Activated naive CD4-positive, alpha-beta T cell treated with anti-CD3 and anti-CD28 coated beads for 36 hours (primary cell): ENCODE measurements at regions of chr1 and their contacts with region 1.

Region 1: DNA sequence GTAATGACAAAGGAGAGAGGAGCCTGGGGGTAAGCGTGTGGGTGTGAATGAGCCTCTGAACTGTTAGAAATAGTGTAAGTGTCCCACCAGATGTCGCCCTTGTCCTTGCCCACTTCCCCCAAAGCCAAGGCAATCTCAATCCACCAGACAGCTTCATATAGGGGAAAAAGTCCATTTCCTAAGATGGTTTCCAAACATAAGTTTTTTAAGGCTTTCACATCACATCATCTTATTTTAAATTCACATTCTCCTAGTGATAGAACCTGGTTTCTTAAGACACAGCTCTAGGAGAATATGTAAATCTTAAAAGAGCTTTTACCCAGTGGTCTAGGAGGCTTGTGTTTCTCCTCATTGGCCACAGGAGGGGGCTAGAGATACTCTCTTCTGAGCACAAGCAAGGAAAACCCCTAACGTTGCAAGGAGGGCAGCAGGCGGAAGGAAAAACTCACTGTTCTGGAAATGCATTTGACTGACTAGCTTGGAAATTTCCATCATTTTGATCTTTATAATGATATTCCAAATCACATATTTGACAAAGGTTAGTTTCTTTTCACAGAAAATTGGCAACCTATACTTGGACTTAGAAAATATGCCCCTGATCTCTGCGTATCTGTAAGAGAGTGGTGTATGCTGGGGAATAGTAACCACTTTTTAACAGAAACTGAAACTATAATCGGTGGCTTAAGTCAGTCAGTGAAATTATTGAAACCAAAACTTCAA is 51.9 kb upstream of the LPAR3 start:
- DNase-seq: peak; percentile 81
- H3K4me3 Mint-ChIP-seq: peak overlapping the region; percentile 74
- H3K27ac Mint-ChIP-seq: peak overlapping the region; percentile 92
- H3K4me1 Mint-ChIP-seq: peaks cover 14% of the 10 kb centered on the region
- H3K27me3 Mint-ChIP-seq: no peaks in the 10 kb centered on the region

Region 2: GRCh38 chr1:84433258-84434080 is 511.5 kb before region 1 on chr1:
- CTCF ChIA-PET with region 1: no interaction called
- intact Hi-C with region 1: no loop called
- DNase-seq: peak; percentile 76
- H3K4me3 Mint-ChIP-seq: peak overlapping the region; percentile 63
- H3K27ac Mint-ChIP-seq: peak overlapping the region; percentile 25
- H3K4me1 Mint-ChIP-seq: peaks cover 15% of the 10 kb centered on the region
- H3K27me3 Mint-ChIP-seq: no peaks in the 10 kb centered on the region

Region 3: GRCh38 chr1:84996846-84997666 is 52.1 kb after region 1 on chr1 and contains the start of gene MCOLN2:
- CTCF ChIA-PET with region 1: interaction called, 24 read pairs
- intact Hi-C with region 1: loop called (anchors 1 kb)
- DNase-seq: peak; percentile 43
- H3K4me3 Mint-ChIP-seq: peak within 1 kb of the TSS; percentile 79
- H3K27ac Mint-ChIP-seq: peak within 1 kb of the TSS; percentile 80
- H3K4me1 Mint-ChIP-seq: peaks cover 40% of the 10 kb centered on the region
- H3K27me3 Mint-ChIP-seq: peaks cover 17% of the 10 kb centered on the region
- total RNA-seq, gene MCOLN2: 7.4 to 8.4 TPM

Region 4: DNA sequence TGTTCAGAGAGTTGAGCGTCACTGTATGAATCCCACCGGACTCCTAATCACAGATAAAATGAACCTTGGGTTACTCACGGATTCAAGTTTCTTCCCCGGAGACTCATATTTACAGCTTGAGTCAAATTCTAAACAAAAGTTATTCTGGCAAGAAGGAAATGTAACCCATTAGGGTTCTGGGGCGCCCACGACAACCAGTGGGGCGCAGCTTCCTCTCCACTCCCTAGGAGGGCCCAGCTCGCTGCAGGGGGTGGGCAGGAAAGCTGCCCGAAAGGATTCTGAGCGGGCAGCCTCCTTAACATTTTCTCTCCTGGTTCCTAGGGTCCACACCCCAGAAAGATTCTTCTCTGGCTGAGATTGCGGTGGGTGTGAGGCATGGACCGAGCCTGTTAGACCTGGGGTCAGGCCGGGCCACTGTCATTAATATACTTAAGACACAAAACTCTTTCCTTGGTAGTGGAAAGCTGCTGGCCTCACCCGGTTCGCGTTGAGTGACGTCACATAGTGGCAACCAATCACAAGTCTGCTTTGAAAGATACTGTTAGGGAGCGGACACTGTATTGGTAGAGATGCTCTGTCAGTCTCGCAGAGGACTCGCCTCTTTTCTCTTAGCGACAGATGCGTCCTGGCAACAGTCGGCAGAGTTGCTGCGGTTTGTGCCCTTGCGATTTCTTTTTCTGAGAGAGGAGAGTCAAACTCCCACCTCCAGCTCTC is 116.9 kb after region 1 on chr1:
- CTCF ChIA-PET with region 1: interaction called, 12 read pairs
- intact Hi-C with region 1: loop called (anchors 1 kb)
- DNase-seq: peak; percentile 93
- H3K4me3 Mint-ChIP-seq: peak overlapping the region; percentile 82
- H3K27ac Mint-ChIP-seq: peak overlapping the region; percentile 60
- H3K4me1 Mint-ChIP-seq: peaks cover 10% of the 10 kb centered on the region
- H3K27me3 Mint-ChIP-seq: no peaks in the 10 kb centered on the region

Region 5: DNA sequence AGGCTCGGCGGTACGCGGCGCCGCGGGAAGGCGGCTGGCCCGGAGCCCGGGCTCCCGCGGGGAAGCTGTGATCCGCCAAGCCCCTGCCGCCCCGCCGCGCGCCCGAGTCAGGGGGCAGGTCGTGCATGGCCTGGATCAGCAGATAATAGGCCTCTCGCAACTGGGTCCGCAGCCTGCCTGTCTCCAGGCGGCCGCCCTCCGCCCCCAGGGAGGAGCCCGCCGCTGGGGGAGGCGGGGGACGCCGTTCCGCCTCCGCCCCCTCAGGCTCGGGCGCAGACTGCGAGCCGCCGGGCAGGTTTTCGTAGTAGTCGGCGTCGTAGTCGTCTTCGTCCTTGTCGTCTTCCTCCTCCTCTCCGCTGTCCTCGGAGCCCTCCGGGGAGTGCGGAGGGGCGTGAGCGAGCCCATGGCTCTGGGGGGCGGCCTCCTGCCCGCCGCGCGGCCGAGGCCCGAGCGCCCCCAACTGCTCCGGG is 256.0 kb after region 1 on chr1 and contains the start of gene SYDE2:
- CTCF ChIA-PET with region 1: interaction called, 4 read pairs
- intact Hi-C with region 1: loop called (anchors 1 kb)
- DNase-seq: peak; percentile 76
- H3K4me3 Mint-ChIP-seq: peak within 1 kb of the TSS; percentile 98
- H3K27ac Mint-ChIP-seq: peak within 1 kb of the TSS; percentile 89
- H3K4me1 Mint-ChIP-seq: peaks cover 33% of the 10 kb centered on the region
- H3K27me3 Mint-ChIP-seq: no peaks in the 10 kb centered on the region
- total RNA-seq, gene SYDE2: 4.4 to 5.1 TPM

Region 6: DNA sequence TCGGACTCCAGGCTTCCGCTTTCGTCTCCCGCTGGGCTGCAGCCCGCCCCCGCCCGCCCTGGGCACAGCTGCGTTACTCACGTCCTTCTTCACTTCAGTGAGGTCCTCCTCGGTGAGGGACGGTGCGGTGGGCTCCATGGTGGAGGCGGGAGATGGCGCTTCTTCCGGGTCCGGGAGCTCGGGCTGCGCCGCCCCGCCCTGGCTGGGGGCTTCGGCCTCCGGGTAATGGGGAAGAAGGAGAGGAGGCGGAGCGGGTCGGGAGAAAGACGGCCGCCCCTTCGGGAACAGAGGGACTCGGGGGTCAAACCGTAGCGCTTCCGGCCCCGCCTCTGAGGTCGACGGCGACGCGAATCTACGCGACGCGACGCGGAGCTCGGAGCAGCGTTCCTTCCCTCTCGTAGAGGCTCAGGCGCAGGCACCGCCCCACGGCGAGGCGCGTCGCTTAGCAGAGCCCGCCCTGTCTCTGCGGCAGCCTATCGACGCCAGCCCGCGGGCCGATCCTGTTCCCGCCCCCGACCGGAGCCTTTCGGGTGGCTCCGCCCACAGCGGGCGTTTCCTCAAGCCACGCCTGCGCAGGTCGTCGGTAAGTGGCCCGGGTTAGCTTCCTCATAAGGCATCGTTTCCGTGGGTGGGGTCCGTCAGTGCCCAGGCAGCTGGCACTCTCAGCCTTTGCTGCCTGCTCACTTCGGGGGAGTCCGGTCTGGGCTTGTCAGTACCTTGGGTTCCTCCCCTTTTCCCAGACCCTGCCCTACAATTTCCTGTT is 331.5 kb after region 1 on chr1 and contains the start of gene BCL10:
- CTCF ChIA-PET with region 1: interaction called, 5 read pairs
- intact Hi-C with region 1: loop called (anchors 1 kb)
- DNase-seq: peak; percentile 97
- H3K4me3 Mint-ChIP-seq: peak within 1 kb of the TSS; percentile 80
- H3K27ac Mint-ChIP-seq: peak within 1 kb of the TSS; percentile 87
- H3K4me1 Mint-ChIP-seq: peaks cover 46% of the 10 kb centered on the region
- H3K27me3 Mint-ChIP-seq: no peaks in the 10 kb centered on the region
- total RNA-seq, gene BCL10: 13.8 to 17.7 TPM

Region 7: DNA sequence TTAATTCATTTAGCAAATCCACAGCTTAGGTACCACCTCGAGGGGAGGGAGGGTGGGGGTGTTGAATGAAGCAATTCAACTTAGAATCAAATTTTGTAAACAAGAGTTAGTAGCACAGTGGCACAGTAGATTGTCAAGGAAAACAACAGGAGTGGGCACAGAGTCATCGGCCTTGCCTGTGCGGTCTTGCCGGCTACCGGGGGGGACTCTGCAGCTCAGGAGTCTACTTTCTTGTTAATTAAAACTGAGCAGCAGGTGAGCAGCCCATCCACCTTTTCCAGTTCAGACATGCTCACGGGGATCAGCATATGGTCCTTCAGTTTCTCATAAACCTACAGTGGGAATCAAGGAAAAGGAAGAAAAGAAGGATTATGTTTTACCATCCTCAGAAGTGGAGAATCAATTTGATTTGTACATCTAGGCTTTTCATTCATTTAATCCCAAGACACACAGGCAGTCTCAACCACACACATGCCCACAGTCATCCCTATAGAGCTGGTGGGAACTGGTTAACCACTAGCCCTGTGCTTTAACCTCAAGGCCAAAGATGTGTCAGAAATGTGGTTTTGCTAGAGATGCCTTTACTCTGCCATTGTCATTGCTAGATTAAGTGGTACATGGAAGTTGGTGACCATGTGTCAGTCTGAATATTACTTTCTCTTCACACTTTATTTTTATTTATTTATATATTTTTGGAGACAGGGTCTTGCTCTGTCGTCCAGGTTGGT is 376.5 kb after region 1 on chr1:
- CTCF ChIA-PET with region 1: no interaction called
- intact Hi-C with region 1: no loop called
- DNase-seq: peak; percentile 39
- H3K4me3 Mint-ChIP-seq: no peak overlapping the region
- H3K27ac Mint-ChIP-seq: no peak overlapping the region
- H3K4me1 Mint-ChIP-seq: peaks cover 5% of the 10 kb centered on the region
- H3K27me3 Mint-ChIP-seq: peaks cover 11% of the 10 kb centered on the region

Region 8: DNA sequence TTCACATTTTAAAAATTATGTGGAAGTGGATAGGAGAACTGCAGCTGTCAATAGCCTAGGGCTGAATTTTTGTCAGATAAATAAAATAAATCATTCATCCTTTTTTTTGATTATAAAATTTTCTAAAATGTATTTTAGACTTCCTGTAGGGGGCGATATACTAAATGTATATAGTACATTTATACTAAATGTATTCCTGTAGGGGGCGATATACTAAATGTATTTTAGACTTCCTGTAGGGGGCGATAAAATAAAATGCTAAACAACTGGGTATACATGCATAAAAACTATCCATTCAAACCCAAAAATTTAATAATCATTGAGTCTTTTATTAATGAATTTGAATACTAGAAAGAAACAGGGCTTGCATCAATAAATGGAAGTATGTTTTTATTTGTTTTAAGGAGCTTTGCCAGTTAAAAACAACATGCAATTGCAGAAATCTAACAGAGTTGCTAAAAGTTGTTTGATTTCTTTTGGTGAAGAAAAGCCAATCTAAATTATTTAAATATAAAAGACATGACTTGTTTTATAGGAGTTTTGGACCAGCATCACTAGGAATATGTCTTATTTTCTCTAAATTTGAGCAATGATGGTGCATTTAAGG is 1555.2 kb after region 1 on chr1:
- CTCF ChIA-PET with region 1: no interaction called
- intact Hi-C with region 1: loop called (anchors 10 kb)
- DNase-seq: no peak
- H3K4me3 Mint-ChIP-seq: no peak overlapping the region
- H3K27ac Mint-ChIP-seq: no peak overlapping the region
- H3K4me1 Mint-ChIP-seq: peaks cover 7% of the 10 kb centered on the region
- H3K27me3 Mint-ChIP-seq: peaks cover 8% of the 10 kb centered on the region